ENCODE measurements at regions of chr1 and their contacts with region 1.

Region 1: GRCh38 chr1:119367427-119368124 is 1.0 kb upstream of the HAO2 start:
- DNase-seq: peak; percentile 2
- H3K4me3 ChIP-seq: no peak overlapping the region
- H3K27me3 ChIP-seq: peaks cover 3% of the 10 kb centered on the region
- CTCF ChIP-seq: peak; percentile 95

Region 2: DNA sequence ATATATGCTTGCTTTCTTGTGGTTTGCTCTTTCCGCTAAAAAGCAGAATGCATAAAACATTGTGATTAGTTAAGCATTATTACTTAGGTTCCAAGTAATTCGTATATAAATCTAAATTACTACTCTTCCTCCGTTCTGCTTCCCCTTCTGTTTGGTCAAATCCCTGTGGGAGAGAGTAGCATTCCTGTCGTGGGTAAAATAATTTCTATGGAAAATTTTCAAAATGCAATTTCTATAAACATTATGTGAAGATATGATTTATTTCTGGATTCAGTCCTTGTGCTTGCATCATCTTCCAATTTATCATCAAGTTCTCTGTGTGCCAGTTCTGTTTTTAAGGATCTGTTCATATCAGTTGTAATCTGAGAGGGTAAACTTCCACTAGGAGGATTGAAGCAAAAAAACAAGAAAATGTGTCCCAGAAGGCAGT is 219.9 kb before region 1 on chr1:
- CTCF ChIA-PET with region 1: no interaction called
- POLR2A ChIA-PET with region 1: no interaction called
- DNase-seq: no peak
- H3K4me3 ChIP-seq: no peak overlapping the region
- H3K27me3 ChIP-seq: no peaks in the 10 kb centered on the region
- CTCF ChIP-seq: no peak

Region 3: GRCh38 chr1:119286587-119287181 is 80.9 kb before region 1 on chr1:
- CTCF ChIA-PET with region 1: interaction called, 161 read pairs
- POLR2A ChIA-PET with region 1: no interaction called
- DNase-seq: no peak
- H3K4me3 ChIP-seq: no peak overlapping the region
- H3K27me3 ChIP-seq: no peaks in the 10 kb centered on the region
- CTCF ChIP-seq: peak; percentile 44

Region 4: GRCh38 chr1:119316870-119317416 is 50.6 kb before region 1 on chr1:
- CTCF ChIA-PET with region 1: no interaction called
- POLR2A ChIA-PET with region 1: no interaction called
- DNase-seq: no peak
- H3K4me3 ChIP-seq: no peak overlapping the region
- H3K27me3 ChIP-seq: peaks cover 1% of the 10 kb centered on the region; the same call in 1 of the 2 replicates
- CTCF ChIP-seq: 0 out of 2 replicates have a peak, but pooled peaks have one; percentile 13